ENCODE measurements at regions of chr2 and their contacts with region 1.

Region 1: DNA sequence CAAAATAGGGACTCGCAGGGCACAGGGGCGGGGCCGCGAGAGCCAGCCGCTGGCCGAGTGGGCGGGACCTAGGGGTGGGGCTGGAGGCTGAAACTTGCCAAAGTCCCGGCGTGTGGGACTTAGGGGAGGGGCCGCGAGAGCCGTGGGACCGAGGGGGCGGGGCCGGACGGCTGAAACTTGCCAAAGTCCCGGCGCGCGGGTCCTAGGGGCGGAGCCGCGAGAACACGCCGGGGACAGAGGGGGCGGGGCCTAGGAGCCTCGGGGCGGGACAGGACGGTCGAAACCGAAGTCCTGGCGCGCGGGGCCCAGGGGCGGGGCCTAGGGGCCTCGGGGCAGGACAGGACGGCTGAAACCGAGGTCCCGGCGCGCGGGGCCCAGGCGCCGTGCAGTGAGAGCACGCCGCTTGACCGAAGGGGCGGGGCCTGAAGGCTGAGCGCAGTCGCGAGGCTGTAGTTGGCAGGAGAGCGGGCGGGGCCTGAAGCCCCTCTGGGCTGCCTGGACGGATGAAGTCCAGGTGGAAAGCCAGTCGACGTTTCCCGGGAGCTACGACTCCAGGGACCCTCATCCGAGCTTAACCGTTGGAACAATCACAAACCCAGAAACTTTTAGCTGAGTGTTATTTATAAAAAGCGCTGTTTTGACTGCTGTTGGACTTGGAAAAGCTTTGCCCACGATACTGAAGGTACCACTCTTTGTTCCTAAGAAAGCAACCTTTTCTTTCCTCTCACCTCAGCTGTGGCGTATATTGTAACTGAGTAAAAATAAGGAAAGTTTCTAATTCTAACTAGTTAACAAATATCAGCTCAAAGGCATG is 475 bp upstream of the BARD1 start:
- DNase-seq: peak; percentile 97
- ATAC-seq: peak; percentile 89
- H3K4me3 ChIP-seq: peak overlapping the region; percentile 81
- H3K27ac ChIP-seq: 0 out of 2 replicates have a peak overlapping the region, but pooled peaks have one; percentile 1
- H3K4me1 ChIP-seq: peaks cover 28% of the 10 kb centered on the region
- H3K27me3 ChIP-seq: no peaks in the 10 kb centered on the region
- CTCF ChIP-seq: no peak

Region 2: DNA sequence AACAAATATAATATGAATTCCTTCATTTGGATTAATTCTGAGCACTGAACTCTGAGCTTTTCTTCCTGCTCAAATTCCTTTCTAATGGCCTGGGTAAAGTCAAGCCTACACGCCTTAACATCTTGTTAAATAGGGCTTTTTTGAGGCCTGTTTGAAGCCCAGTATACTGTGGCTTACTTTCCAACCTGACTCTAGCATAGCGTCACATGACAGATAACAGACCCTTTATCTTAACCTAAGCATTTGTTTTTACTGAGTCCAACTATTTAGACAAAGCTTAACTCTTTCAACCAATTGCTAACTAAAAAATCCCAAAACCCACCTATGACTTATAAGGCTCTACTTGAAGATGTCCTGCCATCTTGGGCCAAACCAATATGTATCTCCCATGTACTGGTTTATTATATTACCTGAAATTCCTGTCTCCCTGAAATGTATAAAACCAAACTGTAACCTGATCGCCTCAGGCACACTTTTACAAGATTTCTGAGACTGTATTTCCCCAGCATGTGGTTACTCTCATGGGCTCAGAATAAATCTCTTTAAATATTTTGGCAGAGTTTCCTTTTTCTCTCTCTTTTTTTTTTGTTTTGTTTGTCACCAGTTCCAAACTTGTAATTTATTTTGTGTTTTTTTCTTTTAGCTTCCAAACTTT is 670.2 kb before region 1 on chr2:
- CTCF ChIA-PET with region 1: no interaction called
- POLR2A ChIA-PET with region 1: no interaction called
- intact Hi-C with region 1: no loop called
- DNase-seq: peak; percentile 90
- ATAC-seq: peak; percentile 86
- H3K4me3 ChIP-seq: peak overlapping the region; percentile 24; the same call in 1 of the 2 replicates
- H3K27ac ChIP-seq: peak overlapping the region; percentile 44
- H3K4me1 ChIP-seq: peaks cover 33% of the 10 kb centered on the region
- H3K27me3 ChIP-seq: no peaks in the 10 kb centered on the region
- CTCF ChIP-seq: no peak

Region 3: DNA sequence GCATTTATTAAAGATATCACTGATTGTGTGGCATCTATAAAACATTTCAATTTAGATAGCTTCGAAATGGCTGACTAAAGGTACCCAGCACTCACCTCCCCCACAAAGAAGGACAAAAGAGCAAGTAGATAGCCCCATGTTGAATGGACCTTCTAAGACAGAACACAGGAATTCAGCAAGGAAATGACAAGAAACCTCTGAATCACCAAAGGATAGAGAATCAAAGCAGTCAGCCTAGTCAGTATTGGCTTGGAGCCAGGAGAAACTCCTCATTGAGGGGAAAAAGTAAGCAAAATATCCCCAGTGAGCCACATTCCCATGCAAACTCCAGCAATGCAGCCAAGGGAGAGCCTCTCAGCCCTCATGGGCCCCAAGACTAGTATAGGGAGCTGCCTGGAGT is 114.2 kb before region 1 on chr2:
- CTCF ChIA-PET with region 1: no interaction called
- POLR2A ChIA-PET with region 1: no interaction called
- intact Hi-C with region 1: loop called (anchors 5 kb)
- DNase-seq: peak; percentile 22
- ATAC-seq: peak; percentile 56
- H3K4me3 ChIP-seq: no peak overlapping the region
- H3K27ac ChIP-seq: no peak overlapping the region
- H3K4me1 ChIP-seq: peaks cover 19% of the 10 kb centered on the region
- H3K27me3 ChIP-seq: no peaks in the 10 kb centered on the region
- CTCF ChIP-seq: no peak

Region 4: DNA sequence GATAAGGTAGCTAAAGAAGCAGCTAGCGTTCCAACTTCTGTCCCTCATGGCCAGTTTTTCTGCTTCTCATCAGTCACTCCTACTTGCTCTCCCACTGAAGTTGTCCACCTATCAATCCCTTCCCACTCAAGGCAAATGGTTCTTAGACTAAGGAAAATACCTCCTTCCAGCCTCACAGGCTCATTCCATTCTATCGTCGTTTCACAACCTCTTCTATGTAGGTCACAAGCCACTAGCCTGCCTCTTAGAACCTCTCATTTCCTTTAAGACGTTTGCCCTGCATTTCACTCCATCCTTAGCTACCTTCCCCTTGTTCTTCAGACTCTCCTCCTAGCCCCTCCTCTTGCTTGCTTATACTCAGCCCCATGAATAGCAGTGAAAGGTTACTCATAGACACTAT is 284.4 kb after region 1 on chr2:
- CTCF ChIA-PET with region 1: no interaction called
- POLR2A ChIA-PET with region 1: no interaction called
- intact Hi-C with region 1: no loop called
- DNase-seq: no peak
- ATAC-seq: no peak
- H3K4me3 ChIP-seq: no peak overlapping the region
- H3K27ac ChIP-seq: no peak overlapping the region
- H3K4me1 ChIP-seq: 0 out of 2 replicates have a peak, but pooled peaks cover 7% of the 10 kb centered on the region
- H3K27me3 ChIP-seq: no peaks in the 10 kb centered on the region
- CTCF ChIP-seq: no peak